IMR-90 (cell line): ENCODE measurements at regions of chr17 and their contacts with region 1.

Region 1: DNA sequence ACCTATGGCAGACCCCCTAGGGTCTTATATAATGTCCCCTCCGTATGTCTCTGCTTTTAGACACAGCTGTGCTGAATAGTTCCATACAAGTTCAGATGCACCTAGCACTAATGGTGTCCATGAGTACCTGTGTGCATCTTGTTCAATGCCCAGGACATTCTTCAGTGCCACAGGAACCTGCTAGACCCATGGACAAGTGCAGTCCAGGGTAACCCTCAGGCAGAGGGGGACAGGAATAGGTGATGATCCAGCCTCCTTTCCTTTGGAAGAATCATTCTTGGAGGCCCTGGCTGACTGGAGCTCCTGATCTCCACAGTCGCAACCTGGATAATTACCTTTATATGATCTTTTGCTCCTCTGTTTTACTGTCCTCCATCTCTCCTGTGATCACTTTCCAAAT is 28.4 kb upstream of the PPM1D start:
- DNase-seq: no peak
- ATAC-seq: no peak
- H3K4me3 ChIP-seq: no peak overlapping the region
- H3K27ac ChIP-seq: peak overlapping the region; percentile 59; the same call in 1 of the 2 replicates
- H3K4me1 ChIP-seq: peaks cover 9% of the 10 kb centered on the region
- H3K27me3 ChIP-seq: no peaks in the 10 kb centered on the region
- CTCF ChIP-seq: no peak
- POLR2A ChIP-seq: no peak
- RAD21 ChIP-seq: no peak

Region 2: GRCh38 chr17:60535463-60535862 is 36.1 kb before region 1 on chr17:
- CTCF ChIA-PET with region 1: interaction called, 8 read pairs
- POLR2A ChIA-PET with region 1: no interaction called
- dilution Hi-C with region 1: no loop called
- in situ Hi-C with region 1: no loop called
- intact Hi-C with region 1: loop called (anchors 2 kb)
- DNase-seq: peak; percentile 98
- ATAC-seq: peak; percentile 96
- H3K4me3 ChIP-seq: no peak overlapping the region
- H3K27ac ChIP-seq: peak overlapping the region; percentile 73; the same call in 1 of the 2 replicates
- H3K4me1 ChIP-seq: peaks cover 19% of the 10 kb centered on the region
- H3K27me3 ChIP-seq: no peaks in the 10 kb centered on the region
- CTCF ChIP-seq: no peak
- POLR2A ChIP-seq: no peak
- RAD21 ChIP-seq: no peak

Region 3: DNA sequence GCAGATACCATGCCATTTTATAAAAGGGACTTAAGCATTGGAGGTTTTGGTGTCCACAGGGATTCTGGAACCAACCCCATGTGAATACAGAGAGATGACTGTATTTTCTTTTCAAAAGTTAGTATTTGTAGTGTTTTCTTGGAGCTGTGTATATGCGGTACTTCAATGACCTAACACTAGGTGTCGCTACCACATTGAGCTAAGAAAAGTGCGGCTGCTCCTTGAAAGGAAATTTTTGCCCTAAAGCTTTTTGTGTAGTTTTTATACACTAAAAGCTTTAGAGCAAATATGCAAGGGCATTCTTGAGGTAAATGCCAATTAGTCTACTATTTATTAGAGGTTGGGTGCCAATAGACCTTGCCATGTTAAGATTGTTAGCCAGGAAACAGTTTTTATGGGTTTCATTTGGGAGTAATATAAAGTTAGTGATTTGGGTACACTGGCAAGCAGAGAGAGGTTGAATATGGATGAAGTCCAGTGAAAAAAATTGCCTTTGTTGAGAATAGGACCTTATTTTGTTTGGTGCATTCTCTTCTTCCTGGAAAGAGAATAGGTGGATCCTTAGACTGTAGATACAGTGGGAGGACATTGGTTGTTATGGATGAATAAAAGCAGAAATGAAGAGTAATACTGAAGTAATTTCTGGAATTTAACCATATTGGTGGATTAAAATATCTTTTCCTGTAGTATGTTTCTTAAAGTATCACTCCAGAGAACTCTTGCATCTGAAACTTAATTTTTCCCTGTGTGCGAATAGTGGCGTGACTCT is 149.4 kb after region 1 on chr17:
- CTCF ChIA-PET with region 1: no interaction called
- POLR2A ChIA-PET with region 1: no interaction called
- dilution Hi-C with region 1: no loop called
- in situ Hi-C with region 1: no loop called
- intact Hi-C with region 1: no loop called
- DNase-seq: peak; percentile 81
- ATAC-seq: peak; percentile 90
- H3K4me3 ChIP-seq: no peak overlapping the region
- H3K27ac ChIP-seq: no peak overlapping the region
- H3K4me1 ChIP-seq: peaks cover 3% of the 10 kb centered on the region; the same call in 1 of the 2 replicates
- H3K27me3 ChIP-seq: no peaks in the 10 kb centered on the region
- CTCF ChIP-seq: peak; percentile 86
- POLR2A ChIP-seq: peak; percentile 31; the same call in 1 of the 2 replicates
- RAD21 ChIP-seq: peak; percentile 94

Region 4: GRCh38 chr17:60743799-60744198 is 172.2 kb after region 1 on chr17:
- CTCF ChIA-PET with region 1: no interaction called
- POLR2A ChIA-PET with region 1: no interaction called
- dilution Hi-C with region 1: no loop called
- in situ Hi-C with region 1: no loop called
- intact Hi-C with region 1: no loop called
- DNase-seq: peak; percentile 43
- ATAC-seq: peak; percentile 79
- H3K4me3 ChIP-seq: peak overlapping the region; percentile 44; the same call in 1 of the 2 replicates
- H3K27ac ChIP-seq: peak overlapping the region; percentile 96
- H3K4me1 ChIP-seq: 0 out of 2 replicates have a peak, but pooled peaks cover 2% of the 10 kb centered on the region
- H3K27me3 ChIP-seq: no peaks in the 10 kb centered on the region
- CTCF ChIP-seq: no peak
- POLR2A ChIP-seq: 0 out of 2 replicates have a peak, but pooled peaks have one; percentile 39
- RAD21 ChIP-seq: no peak

Region 5: GRCh38 chr17:60766778-60767190 is 195.2 kb after region 1 on chr17:
- CTCF ChIA-PET with region 1: no interaction called
- POLR2A ChIA-PET with region 1: no interaction called
- dilution Hi-C with region 1: no loop called
- in situ Hi-C with region 1: no loop called
- intact Hi-C with region 1: no loop called
- DNase-seq: no peak
- ATAC-seq: no peak
- H3K4me3 ChIP-seq: no peak overlapping the region
- H3K27ac ChIP-seq: no peak overlapping the region
- H3K4me1 ChIP-seq: no peaks in the 10 kb centered on the region
- H3K27me3 ChIP-seq: no peaks in the 10 kb centered on the region
- CTCF ChIP-seq: no peak
- POLR2A ChIP-seq: no peak
- RAD21 ChIP-seq: no peak